ENCODE measurements at regions of chr4 and their contacts with region 1.

Region 1: DNA sequence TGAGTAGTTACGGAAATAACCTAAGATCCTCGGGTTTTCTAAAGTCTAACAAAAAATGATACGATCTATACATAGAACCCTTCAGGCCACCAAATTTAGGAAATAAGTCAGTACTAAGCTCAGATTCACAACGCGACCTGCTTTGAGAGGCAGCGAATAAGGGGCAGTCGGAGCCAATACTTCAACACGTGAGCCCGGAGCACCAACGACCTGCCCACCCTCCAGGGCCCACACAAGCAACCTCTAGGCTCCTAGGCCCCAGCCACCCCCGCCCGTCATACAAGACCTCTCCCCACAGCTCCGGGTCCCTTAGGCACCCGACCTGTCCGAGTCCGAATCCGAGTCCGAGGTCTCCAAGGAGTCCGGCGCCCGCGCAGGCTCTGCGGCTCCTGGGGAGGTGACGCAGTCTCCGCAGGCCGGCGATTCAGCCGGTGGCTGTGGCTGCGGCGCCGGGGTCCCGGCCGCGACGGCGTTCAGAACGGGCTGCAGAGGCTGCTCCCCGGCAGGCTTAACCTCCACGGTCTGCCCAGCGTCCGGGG is 580 bp downstream of the NAF1 start:
- DNase-seq: peak; percentile 58 to 72
- ATAC-seq: peak; percentile 58 to 72 (median 62)
- H3K4me3 ChIP-seq: peak overlapping the region; percentile 97
- H3K4me3 Mint-ChIP-seq: peak overlapping the region; percentile 85
- H3K27ac ChIP-seq: peak overlapping the region; percentile 95
- H3K27ac Mint-ChIP-seq: peak overlapping the region; percentile 94 to 98
- H3K4me1 ChIP-seq: peaks cover 12% of the 10 kb centered on the region
- H3K4me1 Mint-ChIP-seq: peaks cover 23 to 34% of the 10 kb centered on the region in 2 donors
- H3K27me3 ChIP-seq: no peaks in the 10 kb centered on the region
- H3K27me3 Mint-ChIP-seq: no peaks in the 10 kb centered on the region
- CTCF ChIP-seq: no peak

Region 2: DNA sequence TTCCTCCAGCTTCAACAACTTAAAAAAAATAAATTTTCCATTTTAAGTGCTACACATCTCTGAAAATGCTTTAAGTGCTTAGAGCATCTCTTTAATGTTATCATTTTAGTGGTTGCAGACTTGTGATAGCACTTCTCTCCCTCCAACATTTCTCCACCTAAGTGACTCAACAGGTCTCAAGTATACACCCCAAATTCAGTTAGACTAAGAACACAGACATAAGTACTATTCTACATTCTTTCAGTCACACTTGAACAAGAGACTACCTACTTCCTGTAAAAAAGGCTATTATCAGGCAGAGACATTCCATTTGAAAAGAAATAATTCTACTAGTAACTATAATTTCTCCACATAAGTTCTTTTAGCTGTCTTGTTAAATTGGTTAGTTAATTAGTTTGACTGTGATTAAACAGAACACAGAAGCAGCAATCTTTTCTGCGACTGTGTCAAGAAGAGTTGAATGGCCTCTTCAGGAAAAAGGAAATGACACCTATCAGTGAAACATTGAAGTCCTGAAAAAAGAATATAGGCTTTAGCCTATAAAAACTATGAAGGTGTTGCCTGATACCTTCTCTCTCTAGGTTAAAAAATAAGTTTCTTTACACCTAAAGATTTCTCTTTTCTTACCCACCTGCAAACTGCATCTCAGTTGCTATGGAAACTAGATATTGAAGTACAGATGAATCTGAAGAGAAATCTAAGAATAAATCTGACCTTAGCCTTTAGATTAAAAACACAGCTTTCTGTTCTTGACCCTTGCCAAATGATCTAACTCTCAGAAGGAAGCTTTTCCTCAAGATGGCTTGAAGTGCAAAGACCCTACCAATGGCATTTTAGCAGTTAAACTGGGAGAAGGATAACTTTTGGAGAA is 17.4 kb before region 1 on chr4:
- intact Hi-C with region 1: loop called (anchors 2 kb)
- DNase-seq: no peak
- ATAC-seq: peak; percentile 78 to 92 (median 86)
- H3K4me3 ChIP-seq: no peak overlapping the region
- H3K4me3 Mint-ChIP-seq: peak overlapping the region; percentile 1
- H3K27ac ChIP-seq: peak overlapping the region; percentile 38
- H3K27ac Mint-ChIP-seq: peak overlapping the region; percentile 67 to 74
- H3K4me1 ChIP-seq: no peaks in the 10 kb centered on the region
- H3K4me1 Mint-ChIP-seq: peaks cover 28% of the 10 kb centered on the region in 2 donors
- H3K27me3 ChIP-seq: no peaks in the 10 kb centered on the region
- H3K27me3 Mint-ChIP-seq: no peaks in the 10 kb centered on the region
- CTCF ChIP-seq: no peak

Region 3: DNA sequence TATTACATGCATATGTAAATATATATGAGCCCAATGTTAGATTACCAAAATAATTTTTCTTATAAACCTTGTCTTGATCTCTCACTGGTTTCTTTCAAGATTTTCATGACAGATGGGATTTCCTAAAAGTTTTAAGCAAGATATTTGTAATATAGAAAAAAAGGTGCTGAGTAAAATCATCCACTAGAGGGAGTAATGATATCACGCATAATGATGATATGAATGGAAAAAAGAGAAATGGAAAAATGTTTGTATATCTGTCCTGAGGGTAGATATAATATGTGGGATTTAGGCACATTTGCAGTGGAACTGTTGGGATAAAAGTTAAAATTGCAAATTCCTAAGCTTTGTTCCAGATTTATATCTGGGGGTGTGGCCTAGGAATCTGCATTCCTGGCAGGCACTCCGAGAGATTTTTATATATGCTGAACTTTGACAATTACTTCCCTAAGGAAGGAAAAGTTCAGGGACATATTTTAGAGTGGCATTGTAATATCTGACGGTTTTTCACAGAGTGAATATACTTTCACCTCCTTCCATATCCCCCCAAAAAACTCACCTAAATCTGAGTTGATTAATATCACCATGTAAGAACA is 388.9 kb after region 1 on chr4:
- intact Hi-C with region 1: loop called (anchors 2 kb)
- DNase-seq: peak in 1 of 2 donors; percentile 56
- ATAC-seq: no peak
- H3K4me3 ChIP-seq: no peak overlapping the region
- H3K4me3 Mint-ChIP-seq: no peak overlapping the region
- H3K27ac ChIP-seq: no peak overlapping the region
- H3K27ac Mint-ChIP-seq: no peak overlapping the region
- H3K4me1 ChIP-seq: peaks cover 14% of the 10 kb centered on the region
- H3K4me1 Mint-ChIP-seq: peaks cover 22 to 26% of the 10 kb centered on the region in 2 donors
- H3K27me3 ChIP-seq: no peaks in the 10 kb centered on the region
- H3K27me3 Mint-ChIP-seq: peaks cover 0 to 3% of the 10 kb centered on the region in 2 donors
- CTCF ChIP-seq: peak; percentile 77

Region 4: GRCh38 chr4:164725066-164725465 is 1559.0 kb after region 1 on chr4:
- intact Hi-C with region 1: loop called (anchors 10 kb)
- DNase-seq: peak in 1 of 2 donors; percentile 6
- ATAC-seq: peak; percentile 58 to 90 (median 73)
- H3K4me3 ChIP-seq: no peak overlapping the region
- H3K4me3 Mint-ChIP-seq: peak overlapping the region; percentile 59
- H3K27ac ChIP-seq: no peak overlapping the region
- H3K27ac Mint-ChIP-seq: no peak overlapping the region
- H3K4me1 ChIP-seq: peaks cover 3% of the 10 kb centered on the region
- H3K4me1 Mint-ChIP-seq: peaks cover 23 to 43% of the 10 kb centered on the region in 2 donors
- H3K27me3 ChIP-seq: no peaks in the 10 kb centered on the region
- H3K27me3 Mint-ChIP-seq: peaks cover 3 to 11% of the 10 kb centered on the region in 2 donors
- CTCF ChIP-seq: no peak

Region 5: GRCh38 chr4:165112368-165113139 is 1946.4 kb after region 1 on chr4 and contains the start of gene TMEM192:
- intact Hi-C with region 1: loop called (anchors 5 kb)
- DNase-seq: peak; percentile 93 to 96
- ATAC-seq: peak; percentile 95 to 99 (median 96)
- H3K4me3 ChIP-seq: peak within 1 kb of the TSS; percentile 79
- H3K4me3 Mint-ChIP-seq: peak within 1 kb of the TSS; percentile 93
- H3K27ac ChIP-seq: peak within 1 kb of the TSS; percentile 83
- H3K27ac Mint-ChIP-seq: peak within 1 kb of the TSS; percentile 88 to 96
- H3K4me1 ChIP-seq: peaks cover 6% of the 10 kb centered on the region
- H3K4me1 Mint-ChIP-seq: peaks cover 18 to 26% of the 10 kb centered on the region in 2 donors
- H3K27me3 ChIP-seq: no peaks in the 10 kb centered on the region
- H3K27me3 Mint-ChIP-seq: peaks cover 9 to 11% of the 10 kb centered on the region in 2 donors
- CTCF ChIP-seq: no peak
- total RNA-seq, gene TMEM192: 9.4 to 11.4 (median 11.0) TPM

Measured in natural killer cell (primary cell).